ENCODE measurements at regions of chr7 and their contacts with region 1.

Region 1: GRCh38 chr7:37352974-37353948 is 95.4 kb downstream of the ELMO1 start:
- DNase-seq: peak; percentile 36 to 88 (median 68)
- ATAC-seq: peak; percentile 87
- H3K4me3 ChIP-seq: peak overlapping the region; percentile 64 to 75
- H3K4me3 Mint-ChIP-seq: peak overlapping the region; percentile 95
- H3K27ac ChIP-seq: peak overlapping the region; percentile 50 to 59
- H3K27ac Mint-ChIP-seq: peak overlapping the region; percentile 94
- H3K4me1 ChIP-seq: peaks cover 28% of the 10 kb centered on the region
- H3K4me1 Mint-ChIP-seq: peaks cover 75% of the 10 kb centered on the region
- H3K27me3 ChIP-seq: no peaks in the 10 kb centered on the region
- H3K27me3 Mint-ChIP-seq: no peaks in the 10 kb centered on the region
- CTCF ChIP-seq: peak; percentile 89

Region 2: DNA sequence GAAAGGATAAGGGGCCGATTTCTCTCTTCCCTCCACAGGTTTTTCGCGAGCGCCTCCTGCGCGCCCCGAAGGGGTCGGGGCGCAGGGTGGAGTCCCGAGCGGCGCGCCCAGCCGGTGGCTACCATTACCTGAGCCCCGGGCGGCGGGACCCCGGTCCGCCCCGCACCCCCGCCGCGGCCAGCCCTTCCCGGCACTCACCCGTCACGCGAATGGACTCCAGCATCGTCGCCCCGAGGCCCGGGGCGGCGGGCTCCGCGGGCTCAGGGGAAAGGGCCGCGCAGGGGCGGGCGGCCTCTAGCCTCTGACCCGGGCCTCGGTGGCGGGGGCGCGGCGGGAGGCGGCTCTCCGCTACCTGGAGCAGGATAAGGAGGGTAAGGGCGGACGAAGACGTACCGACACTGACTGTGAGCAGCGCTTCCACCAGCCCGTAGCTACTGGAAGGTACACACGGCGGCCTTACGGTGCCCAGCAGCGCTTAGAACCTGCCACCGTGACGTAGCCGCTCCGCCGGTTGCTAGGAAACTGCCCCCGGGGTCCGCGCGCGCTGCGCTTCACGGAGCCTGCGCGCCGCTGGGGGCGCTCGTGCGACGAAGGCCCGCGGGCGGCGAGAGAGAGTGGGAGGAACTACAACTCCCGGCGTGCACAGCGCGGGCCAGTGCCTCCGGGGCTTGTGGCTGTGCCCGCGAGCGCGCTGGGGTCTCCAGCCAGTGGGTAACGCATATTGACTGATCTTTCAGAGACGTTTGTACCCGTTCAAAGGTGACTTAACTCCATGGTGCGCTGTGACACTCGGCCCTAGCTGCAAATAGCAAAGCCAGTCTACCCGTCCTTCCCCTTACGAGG is 986.3 kb before region 1 on chr7:
- CTCF ChIA-PET with region 1: no interaction called
- POLR2A ChIA-PET with region 1: no interaction called
- intact Hi-C with region 1: loop called (anchors 10 kb)
- DNase-seq: peak; percentile 88 to 96 (median 92)
- ATAC-seq: peak; percentile 96
- H3K4me3 ChIP-seq: peak overlapping the region; percentile 65 to 73
- H3K4me3 Mint-ChIP-seq: peak overlapping the region; percentile 94
- H3K27ac ChIP-seq: peak overlapping the region; percentile 62 to 71
- H3K27ac Mint-ChIP-seq: peak overlapping the region; percentile 85
- H3K4me1 ChIP-seq: peaks cover 4% of the 10 kb centered on the region
- H3K4me1 Mint-ChIP-seq: peaks cover 6% of the 10 kb centered on the region
- H3K27me3 ChIP-seq: peaks cover 0 to 2% of the 10 kb centered on the region in 2 experiments
- H3K27me3 Mint-ChIP-seq: peaks cover 2% of the 10 kb centered on the region
- CTCF ChIP-seq: peak; percentile 91

Region 3: DNA sequence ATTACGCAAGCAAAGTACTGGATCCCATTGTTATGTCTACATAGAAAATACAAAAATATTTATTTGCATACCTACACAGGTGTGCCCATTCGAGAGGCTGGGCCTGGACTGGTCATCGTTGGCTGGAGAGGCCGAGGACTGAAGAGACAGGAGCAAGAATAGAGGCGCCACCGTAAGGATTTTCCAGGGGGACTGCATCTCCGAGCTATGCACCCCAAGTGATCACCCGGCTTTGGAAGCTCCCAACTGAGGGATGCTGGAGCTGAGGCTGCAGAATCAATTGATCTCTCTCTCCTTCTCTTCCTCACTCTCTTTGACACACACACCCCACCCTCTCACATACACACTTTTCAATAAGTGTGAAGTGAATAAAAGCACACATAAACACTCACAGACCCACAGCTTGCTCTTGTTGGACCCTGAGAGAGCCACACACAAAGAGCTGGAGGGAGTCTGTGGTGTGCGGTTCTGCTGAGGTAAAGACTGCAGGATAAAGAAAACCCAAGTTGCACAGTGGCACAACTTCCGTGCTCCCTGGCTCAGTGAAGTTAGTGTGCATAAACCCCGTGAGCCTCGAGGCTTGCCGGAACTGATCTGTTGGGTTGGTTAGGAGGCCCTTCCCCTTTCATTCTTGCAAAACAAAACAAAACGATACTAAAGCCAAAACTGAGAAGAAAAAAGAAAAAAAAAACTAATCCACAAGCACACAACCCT is 629.2 kb before region 1 on chr7 and contains the start of gene AOAH:
- CTCF ChIA-PET with region 1: no interaction called
- POLR2A ChIA-PET with region 1: no interaction called
- intact Hi-C with region 1: loop called in 1 of 2 experiments (anchors 5 kb)
- DNase-seq: peak; percentile 63 to 97 (median 81)
- ATAC-seq: peak; percentile 90
- H3K4me3 ChIP-seq: peak within 1 kb of the TSS; percentile 62 to 69
- H3K4me3 Mint-ChIP-seq: peak within 1 kb of the TSS; percentile 91
- H3K27ac ChIP-seq: peak within 1 kb of the TSS; percentile 74 to 81
- H3K27ac Mint-ChIP-seq: peak within 1 kb of the TSS; percentile 94
- H3K4me1 ChIP-seq: peaks cover 79% of the 10 kb centered on the region
- H3K4me1 Mint-ChIP-seq: peaks cover 92% of the 10 kb centered on the region
- H3K27me3 ChIP-seq: no peaks in the 10 kb centered on the region
- H3K27me3 Mint-ChIP-seq: no peaks in the 10 kb centered on the region
- CTCF ChIP-seq: no peak
- total RNA-seq, gene AOAH: 30.8 to 35.2 TPM

Region 4: GRCh38 chr7:36840904-36841303 is 512.4 kb before region 1 on chr7:
- CTCF ChIA-PET with region 1: no interaction called
- POLR2A ChIA-PET with region 1: no interaction called
- intact Hi-C with region 1: no loop called
- DNase-seq: no peak
- ATAC-seq: no peak
- H3K4me3 ChIP-seq: no peak overlapping the region
- H3K4me3 Mint-ChIP-seq: no peak overlapping the region
- H3K27ac ChIP-seq: no peak overlapping the region
- H3K27ac Mint-ChIP-seq: no peak overlapping the region
- H3K4me1 ChIP-seq: no peaks in the 10 kb centered on the region
- H3K4me1 Mint-ChIP-seq: no peaks in the 10 kb centered on the region
- H3K27me3 ChIP-seq: no peaks in the 10 kb centered on the region
- H3K27me3 Mint-ChIP-seq: no peaks in the 10 kb centered on the region
- CTCF ChIP-seq: no peak

Region 5: DNA sequence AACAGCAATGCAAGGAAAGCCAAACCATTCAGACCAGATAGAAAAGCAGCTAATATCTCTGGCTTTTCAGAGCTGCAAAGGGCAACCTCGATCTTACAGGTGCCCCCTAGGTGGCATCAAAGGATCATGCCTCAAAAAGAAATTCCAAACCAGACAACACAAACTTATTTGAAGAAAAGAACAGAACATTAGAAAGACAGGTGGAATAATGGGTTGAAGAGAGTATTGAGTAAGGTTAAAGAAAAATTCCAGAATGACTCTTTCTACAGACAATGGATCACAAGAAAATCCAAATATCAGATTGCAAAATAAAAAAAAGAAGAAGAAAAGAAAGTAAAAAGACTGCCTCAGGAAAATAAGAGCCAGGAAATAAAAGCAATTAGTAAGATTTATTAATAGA is 118.3 kb before region 1 on chr7:
- CTCF ChIA-PET with region 1: interaction called, 33 read pairs
- POLR2A ChIA-PET with region 1: interaction called, 6 read pairs
- intact Hi-C with region 1: loop called (anchors 1 kb)
- DNase-seq: peak in 3 of 9 experiments; percentile 16 to 56 (median 45)
- ATAC-seq: no peak
- H3K4me3 ChIP-seq: no peak overlapping the region
- H3K4me3 Mint-ChIP-seq: no peak overlapping the region
- H3K27ac ChIP-seq: no peak overlapping the region
- H3K27ac Mint-ChIP-seq: no peak overlapping the region
- H3K4me1 ChIP-seq: no peaks in the 10 kb centered on the region
- H3K4me1 Mint-ChIP-seq: peaks cover 8% of the 10 kb centered on the region
- H3K27me3 ChIP-seq: no peaks in the 10 kb centered on the region
- H3K27me3 Mint-ChIP-seq: no peaks in the 10 kb centered on the region
- CTCF ChIP-seq: peak; percentile 46

Region 6: GRCh38 chr7:37408291-37409228 is 55.3 kb after region 1 on chr7:
- CTCF ChIA-PET with region 1: no interaction called
- POLR2A ChIA-PET with region 1: no interaction called
- intact Hi-C with region 1: loop called in 1 of 2 experiments (anchors 5 kb)
- DNase-seq: peak in 2 of 9 experiments; percentile 10 to 34
- ATAC-seq: peak; percentile 64
- H3K4me3 ChIP-seq: peak overlapping the region; percentile 21 to 23
- H3K4me3 Mint-ChIP-seq: peak overlapping the region; percentile 81
- H3K27ac ChIP-seq: no peak overlapping the region
- H3K27ac Mint-ChIP-seq: peak overlapping the region; percentile 81
- H3K4me1 ChIP-seq: peaks cover 36% of the 10 kb centered on the region
- H3K4me1 Mint-ChIP-seq: peaks cover 65% of the 10 kb centered on the region
- H3K27me3 ChIP-seq: no peaks in the 10 kb centered on the region
- H3K27me3 Mint-ChIP-seq: no peaks in the 10 kb centered on the region
- CTCF ChIP-seq: no peak

Region 7: DNA sequence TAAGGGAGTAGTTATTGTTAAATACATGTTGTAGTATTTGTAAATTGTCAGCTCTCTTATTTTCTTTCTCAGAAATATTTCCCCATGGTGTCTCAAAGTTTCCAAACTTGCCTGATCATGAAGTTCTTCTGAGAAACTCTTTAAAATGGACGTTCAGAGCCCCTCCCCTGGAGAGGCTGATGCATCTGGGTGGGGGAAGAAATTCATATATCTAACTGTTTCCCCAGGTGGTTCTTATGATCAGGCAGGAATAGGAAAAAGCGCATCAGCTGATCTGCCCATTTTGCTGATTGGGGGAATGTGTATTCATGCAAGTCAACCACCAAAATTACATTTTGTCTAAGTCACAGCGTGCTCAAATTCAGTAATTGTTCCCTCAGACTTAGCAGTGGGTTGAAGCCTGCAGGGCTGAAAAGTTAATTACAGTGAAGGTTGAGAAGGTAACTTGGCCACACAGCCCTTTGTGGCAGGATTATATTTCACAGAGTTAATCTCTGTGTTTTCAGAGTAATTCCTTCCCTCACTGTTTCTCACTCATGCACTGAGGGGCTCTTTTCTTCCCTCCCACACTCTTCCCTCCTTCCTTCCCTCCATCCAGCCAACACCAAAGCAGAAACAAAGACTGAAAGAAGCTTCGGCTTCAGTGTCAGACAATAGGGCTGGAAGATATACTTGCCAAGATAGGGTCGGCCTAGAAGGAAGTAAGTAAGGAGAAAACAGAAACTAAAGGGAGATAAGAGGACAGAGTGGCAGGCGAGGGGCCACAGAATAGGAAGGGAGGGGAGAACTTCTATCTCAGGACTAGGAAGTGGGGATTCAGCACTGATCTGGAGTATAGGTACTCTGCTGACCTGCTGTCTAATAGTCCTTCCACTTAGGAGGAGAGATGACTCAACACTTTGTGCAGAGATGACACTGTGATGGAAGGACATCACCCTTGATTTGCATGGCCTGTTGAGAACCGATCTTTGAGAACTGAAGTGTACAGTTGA is 774.3 kb after region 1 on chr7:
- CTCF ChIA-PET with region 1: no interaction called
- POLR2A ChIA-PET with region 1: no interaction called
- intact Hi-C with region 1: no loop called
- DNase-seq: no peak
- ATAC-seq: no peak
- H3K4me3 ChIP-seq: no peak overlapping the region
- H3K4me3 Mint-ChIP-seq: no peak overlapping the region
- H3K27ac ChIP-seq: no peak overlapping the region
- H3K27ac Mint-ChIP-seq: no peak overlapping the region
- H3K4me1 ChIP-seq: no peaks in the 10 kb centered on the region
- H3K4me1 Mint-ChIP-seq: no peaks in the 10 kb centered on the region
- H3K27me3 ChIP-seq: peaks cover 0 to 2% of the 10 kb centered on the region in 2 experiments
- H3K27me3 Mint-ChIP-seq: peaks cover 11% of the 10 kb centered on the region
- CTCF ChIP-seq: no peak